Activated naive CD4-positive, alpha-beta T cell treated with anti-CD3 and anti-CD28 coated beads for 36 hours (primary cell): ENCODE measurements at regions of chr5 and their contacts with region 1.

Region 1: DNA sequence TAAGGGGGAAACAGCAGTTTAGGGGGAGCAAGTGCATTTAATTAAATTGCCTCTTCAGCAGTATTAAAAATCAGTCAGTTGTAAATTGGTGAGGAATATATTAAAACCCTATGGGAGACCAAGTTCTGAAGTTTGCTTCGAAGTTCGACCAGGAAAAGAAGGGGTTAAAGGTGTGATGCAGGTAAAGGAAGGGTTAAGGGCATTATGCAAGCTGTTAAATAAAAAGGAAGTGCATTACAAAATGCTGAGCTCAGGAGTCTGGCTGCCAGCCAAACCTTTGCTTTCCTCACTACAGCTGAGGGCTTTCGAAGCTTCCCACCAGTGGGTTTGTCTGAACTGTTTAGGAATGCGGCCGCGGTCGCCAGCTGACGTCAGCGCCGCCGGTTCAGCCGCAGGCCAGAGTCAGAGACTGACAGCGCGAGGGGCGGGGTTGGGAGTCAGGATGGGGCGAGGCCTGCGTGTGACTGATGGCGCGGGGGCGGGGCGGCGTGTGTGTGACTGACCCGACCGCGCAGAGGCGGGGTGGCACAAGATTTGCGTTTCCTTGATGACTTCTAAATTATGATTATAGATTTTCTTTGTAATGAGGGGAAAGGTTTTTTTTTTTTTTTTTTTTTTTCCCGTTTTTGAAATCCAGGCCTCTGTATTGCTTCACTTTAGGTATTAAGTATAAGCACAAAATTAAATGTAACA is 76.6 kb downstream of the ZSWIM6 start:
- DNase-seq: peak; percentile 98
- H3K4me3 Mint-ChIP-seq: peak overlapping the region; percentile 62
- H3K27ac Mint-ChIP-seq: no peak overlapping the region
- H3K4me1 Mint-ChIP-seq: peaks cover 34% of the 10 kb centered on the region
- H3K27me3 Mint-ChIP-seq: no peaks in the 10 kb centered on the region

Region 2: GRCh38 chr5:59591162-59591561 is 1817.5 kb before region 1 on chr5:
- CTCF ChIA-PET with region 1: no interaction called
- intact Hi-C with region 1: loop called (anchors 5 kb)
- DNase-seq: no peak
- H3K4me3 Mint-ChIP-seq: no peak overlapping the region
- H3K27ac Mint-ChIP-seq: no peak overlapping the region
- H3K4me1 Mint-ChIP-seq: peaks cover 10% of the 10 kb centered on the region
- H3K27me3 Mint-ChIP-seq: peaks cover 19% of the 10 kb centered on the region

Region 3: GRCh38 chr5:60944904-60945812 is 463.5 kb before region 1 on chr5 and contains the starts of genes ERCC8 and NDUFAF2:
- CTCF ChIA-PET with region 1: no interaction called
- intact Hi-C with region 1: loop called (anchors 1 kb)
- DNase-seq: peak; percentile 92
- H3K4me3 Mint-ChIP-seq: no peak within 1 kb of the TSS
- H3K27ac Mint-ChIP-seq: peak within 1 kb of the TSS; percentile 62
- H3K4me1 Mint-ChIP-seq: peaks cover 24% of the 10 kb centered on the region
- H3K27me3 Mint-ChIP-seq: no peaks in the 10 kb centered on the region
- total RNA-seq, gene ERCC8: 7.8 to 9.1 TPM
- total RNA-seq, gene NDUFAF2: 35.6 to 38.5 TPM

Region 4: GRCh38 chr5:61000887-61001286 is 407.7 kb before region 1 on chr5:
- CTCF ChIA-PET with region 1: no interaction called
- intact Hi-C with region 1: no loop called
- DNase-seq: no peak
- H3K4me3 Mint-ChIP-seq: no peak overlapping the region
- H3K27ac Mint-ChIP-seq: no peak overlapping the region
- H3K4me1 Mint-ChIP-seq: peaks cover 22% of the 10 kb centered on the region
- H3K27me3 Mint-ChIP-seq: no peaks in the 10 kb centered on the region

Region 5: DNA sequence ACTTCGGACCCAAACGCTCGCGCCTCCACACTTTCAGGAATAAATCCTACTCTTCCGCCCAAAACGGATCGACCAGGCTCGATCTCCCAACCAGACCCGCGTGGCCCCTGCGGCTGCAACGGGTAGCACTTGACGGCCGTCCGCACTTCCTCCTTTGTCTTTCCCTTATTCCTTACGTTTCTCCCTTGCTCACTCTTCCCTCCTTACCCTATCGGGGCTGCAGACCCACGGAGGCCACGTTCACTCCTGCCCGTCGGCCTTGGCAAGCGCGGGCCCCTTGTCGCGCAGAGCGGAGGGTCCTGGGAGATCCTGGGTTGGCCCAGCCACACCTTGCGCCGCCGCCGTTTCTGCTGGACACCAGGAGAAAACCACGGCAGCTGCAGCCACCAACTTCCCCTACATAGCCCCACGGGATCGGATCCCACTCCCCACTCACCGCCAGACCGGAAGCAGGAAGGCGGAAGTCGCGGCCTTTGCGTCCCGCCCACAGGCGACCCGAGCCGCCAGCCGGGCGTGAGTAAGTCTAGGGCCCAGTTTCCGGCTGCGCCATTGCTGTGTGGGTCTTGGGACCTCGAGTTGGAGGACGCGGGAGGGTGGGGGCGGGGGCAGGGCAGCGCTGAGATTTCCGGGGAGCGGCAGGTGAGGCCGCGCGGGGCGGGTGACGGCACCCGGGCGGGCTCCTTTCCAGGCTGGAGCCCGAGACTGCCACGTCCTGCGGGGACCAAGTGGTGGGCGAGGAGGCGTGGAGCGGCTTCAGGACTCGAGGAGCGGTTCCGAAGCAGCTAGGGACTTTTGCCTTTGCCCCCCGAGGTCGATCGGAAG is 246.4 kb before region 1 on chr5 and contains the start of gene SMIM15:
- CTCF ChIA-PET with region 1: no interaction called
- intact Hi-C with region 1: loop called (anchors 1 kb)
- DNase-seq: peak; percentile 90
- H3K4me3 Mint-ChIP-seq: peak within 1 kb of the TSS; percentile 97
- H3K27ac Mint-ChIP-seq: peak within 1 kb of the TSS; percentile 95
- H3K4me1 Mint-ChIP-seq: peaks cover 38% of the 10 kb centered on the region
- H3K27me3 Mint-ChIP-seq: no peaks in the 10 kb centered on the region
- total RNA-seq, gene SMIM15: 45.8 to 48.1 TPM

Region 6: DNA sequence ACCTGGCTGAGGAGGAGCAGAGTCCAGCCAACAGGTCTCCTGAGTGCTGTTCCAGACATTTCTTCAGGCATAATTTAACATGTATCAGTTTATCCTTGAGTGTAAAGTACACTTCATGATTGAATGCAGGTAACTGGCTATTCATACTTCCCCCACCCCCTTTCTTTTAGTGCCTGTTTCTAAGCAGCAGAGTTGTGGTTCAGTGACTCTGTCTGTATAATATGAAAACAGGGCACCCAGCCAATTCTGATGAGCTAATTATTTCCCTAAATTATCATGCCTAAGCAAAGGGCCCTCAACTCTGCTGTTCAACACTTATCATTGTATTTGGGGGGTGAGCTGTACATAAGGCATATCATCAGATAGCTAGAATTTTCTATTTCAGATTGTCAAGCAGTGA is 128.4 kb before region 1 on chr5:
- CTCF ChIA-PET with region 1: no interaction called
- intact Hi-C with region 1: loop called (anchors 2 kb)
- DNase-seq: peak; percentile 44
- H3K4me3 Mint-ChIP-seq: no peak overlapping the region
- H3K27ac Mint-ChIP-seq: no peak overlapping the region
- H3K4me1 Mint-ChIP-seq: peaks cover 31% of the 10 kb centered on the region
- H3K27me3 Mint-ChIP-seq: no peaks in the 10 kb centered on the region

Region 7: DNA sequence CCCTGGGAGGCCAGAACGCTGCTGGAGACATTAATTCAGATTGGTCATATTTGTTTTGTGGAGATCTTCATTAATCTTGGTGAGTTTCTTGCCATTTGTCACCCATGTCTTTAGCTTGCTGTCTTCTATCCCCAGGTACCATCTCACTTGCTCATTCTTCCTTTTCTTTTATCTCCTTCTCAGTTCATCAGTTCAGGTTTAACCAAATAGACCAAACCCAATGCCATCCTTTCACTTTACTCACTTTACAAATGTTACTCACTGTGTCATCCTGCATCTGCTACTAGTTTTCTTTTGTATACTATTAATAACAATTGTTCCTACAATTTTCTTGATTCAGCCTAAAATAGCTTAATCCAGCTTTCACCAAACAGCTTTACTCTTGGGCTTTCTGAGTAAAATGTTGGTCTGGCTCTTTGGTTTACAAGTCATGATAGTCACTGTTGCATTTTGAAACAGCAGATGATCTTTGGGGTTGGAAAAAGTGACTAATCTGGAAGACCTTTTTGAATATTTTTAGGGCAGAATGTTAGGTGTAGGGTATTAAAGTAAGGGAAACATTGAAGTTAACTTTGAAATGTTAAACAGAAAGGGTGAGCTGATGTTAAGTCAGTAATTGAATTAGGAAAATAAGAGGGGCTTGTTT is 170.4 kb after region 1 on chr5:
- CTCF ChIA-PET with region 1: no interaction called
- intact Hi-C with region 1: loop called (anchors 1 kb)
- DNase-seq: no peak
- H3K4me3 Mint-ChIP-seq: no peak overlapping the region
- H3K27ac Mint-ChIP-seq: no peak overlapping the region
- H3K4me1 Mint-ChIP-seq: no peaks in the 10 kb centered on the region
- H3K27me3 Mint-ChIP-seq: peaks cover 3% of the 10 kb centered on the region

Region 8: DNA sequence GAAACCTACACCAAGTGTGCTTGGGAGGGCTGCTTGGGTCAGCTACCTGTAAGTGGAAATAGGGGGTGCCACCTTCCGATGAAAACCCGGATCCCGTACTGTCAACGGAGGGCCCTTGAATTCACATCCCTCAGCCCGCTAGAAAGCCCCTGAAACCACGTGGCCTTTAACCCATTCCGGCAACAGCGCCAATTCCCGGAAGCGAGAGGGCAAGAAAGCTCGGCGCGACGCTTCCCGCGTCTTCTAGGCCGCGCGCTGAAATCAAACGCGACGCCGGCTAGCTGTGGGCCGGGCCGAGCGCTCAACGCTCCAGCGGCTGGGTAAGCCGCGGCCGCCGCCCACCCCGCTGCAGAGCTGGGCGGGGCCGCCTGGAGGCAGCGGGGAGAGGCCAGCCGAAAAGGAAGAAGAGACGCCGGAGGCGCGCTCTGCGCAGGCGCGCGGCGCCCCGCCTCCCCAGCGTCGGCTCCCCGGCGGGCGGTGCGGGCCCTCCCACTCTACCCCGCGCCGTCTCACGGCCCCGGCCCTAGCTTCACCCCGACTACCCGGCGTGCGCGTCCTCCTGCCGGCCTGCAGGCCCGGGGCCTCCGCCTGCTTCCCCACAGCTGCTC is 897.2 kb after region 1 on chr5 and contains the start of gene KIF2A:
- CTCF ChIA-PET with region 1: no interaction called
- intact Hi-C with region 1: loop called (anchors 5 kb)
- DNase-seq: peak; percentile 96
- H3K4me3 Mint-ChIP-seq: peak within 1 kb of the TSS; percentile 95
- H3K27ac Mint-ChIP-seq: peak within 1 kb of the TSS; percentile 96
- H3K4me1 Mint-ChIP-seq: peaks cover 45% of the 10 kb centered on the region
- H3K27me3 Mint-ChIP-seq: no peaks in the 10 kb centered on the region
- total RNA-seq, gene KIF2A: 101 to 117 TPM